ENCODE measurements at regions of chr3 and their contacts with region 1.

Region 1: DNA sequence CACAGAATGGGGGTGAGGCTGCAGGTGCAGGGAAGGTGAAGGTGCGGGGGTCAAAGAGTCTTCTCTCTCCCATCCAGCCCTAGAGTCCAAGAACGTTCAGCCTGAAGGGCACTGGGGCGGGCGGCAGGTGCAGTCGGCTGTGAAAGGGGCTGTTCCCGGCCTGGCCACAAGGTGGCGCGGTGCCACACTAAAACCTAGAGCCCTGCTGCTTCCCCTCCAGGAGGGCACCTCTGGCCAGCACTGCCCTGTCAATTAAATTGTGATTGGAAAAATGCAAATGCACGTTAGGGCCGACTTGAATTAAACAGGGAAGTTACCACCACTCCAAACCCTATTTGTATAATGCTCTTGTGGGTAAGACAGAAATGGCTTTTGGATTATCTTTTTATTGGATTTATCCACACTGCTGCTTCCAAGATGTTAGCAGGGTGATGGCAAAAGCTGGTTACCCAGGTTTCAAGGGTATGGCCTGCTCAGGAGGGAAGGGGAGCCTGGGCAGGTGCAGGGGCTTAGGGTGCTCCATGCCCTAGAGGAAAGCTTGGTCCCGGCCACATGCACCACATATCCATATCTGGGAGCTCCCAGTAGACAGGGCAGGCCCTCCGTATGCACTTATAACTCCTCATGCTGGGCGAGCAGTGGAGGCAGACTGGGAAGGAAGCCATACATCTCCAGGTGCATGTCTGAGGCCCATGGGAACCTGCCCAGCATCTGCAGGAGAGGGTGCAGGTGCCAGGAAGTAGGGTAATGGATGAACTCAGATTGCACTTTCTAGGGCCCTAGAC is 119.8 kb downstream of the ADCY5 start:
- DNase-seq: peak; percentile 34
- ATAC-seq: peak; percentile 98
- H3K4me3 ChIP-seq: no peak overlapping the region
- H3K27ac ChIP-seq: no peak overlapping the region
- H3K4me1 ChIP-seq: no peaks in the 10 kb centered on the region
- H3K27me3 ChIP-seq: peaks cover 46% of the 10 kb centered on the region
- CTCF ChIP-seq: peak; percentile 87
- POLR2A ChIP-seq: no peak
- RAD21 ChIP-seq: peak; percentile 84

Region 2: GRCh38 chr3:122560680-122561079 is 768.4 kb before region 1 on chr3:
- CTCF ChIA-PET with region 1: no interaction called
- POLR2A ChIA-PET with region 1: no interaction called
- dilution Hi-C with region 1: no loop called
- in situ Hi-C with region 1: no loop called
- intact Hi-C with region 1: no loop called
- DNase-seq: peak; percentile 71
- ATAC-seq: peak; percentile 25; the same call in 1 of the 2 replicates
- H3K4me3 ChIP-seq: no peak overlapping the region
- H3K27ac ChIP-seq: no peak overlapping the region
- H3K4me1 ChIP-seq: peaks cover 4% of the 10 kb centered on the region
- H3K27me3 ChIP-seq: no peaks in the 10 kb centered on the region
- CTCF ChIP-seq: peak; percentile 68
- POLR2A ChIP-seq: no peak
- RAD21 ChIP-seq: peak; percentile 66

Region 3: GRCh38 chr3:122679085-122679881 is 649.8 kb before region 1 on chr3:
- CTCF ChIA-PET with region 1: no interaction called
- POLR2A ChIA-PET with region 1: no interaction called
- dilution Hi-C with region 1: no loop called
- in situ Hi-C with region 1: no loop called
- intact Hi-C with region 1: no loop called
- DNase-seq: peak; percentile 79
- ATAC-seq: peak; percentile 74
- H3K4me3 ChIP-seq: peak overlapping the region; percentile 28
- H3K27ac ChIP-seq: peak overlapping the region; percentile 9; the same call in 1 of the 2 replicates
- H3K4me1 ChIP-seq: peaks cover 13% of the 10 kb centered on the region
- H3K27me3 ChIP-seq: no peaks in the 10 kb centered on the region
- CTCF ChIP-seq: peak; percentile 89
- POLR2A ChIP-seq: no peak
- RAD21 ChIP-seq: peak; percentile 87

Region 4: DNA sequence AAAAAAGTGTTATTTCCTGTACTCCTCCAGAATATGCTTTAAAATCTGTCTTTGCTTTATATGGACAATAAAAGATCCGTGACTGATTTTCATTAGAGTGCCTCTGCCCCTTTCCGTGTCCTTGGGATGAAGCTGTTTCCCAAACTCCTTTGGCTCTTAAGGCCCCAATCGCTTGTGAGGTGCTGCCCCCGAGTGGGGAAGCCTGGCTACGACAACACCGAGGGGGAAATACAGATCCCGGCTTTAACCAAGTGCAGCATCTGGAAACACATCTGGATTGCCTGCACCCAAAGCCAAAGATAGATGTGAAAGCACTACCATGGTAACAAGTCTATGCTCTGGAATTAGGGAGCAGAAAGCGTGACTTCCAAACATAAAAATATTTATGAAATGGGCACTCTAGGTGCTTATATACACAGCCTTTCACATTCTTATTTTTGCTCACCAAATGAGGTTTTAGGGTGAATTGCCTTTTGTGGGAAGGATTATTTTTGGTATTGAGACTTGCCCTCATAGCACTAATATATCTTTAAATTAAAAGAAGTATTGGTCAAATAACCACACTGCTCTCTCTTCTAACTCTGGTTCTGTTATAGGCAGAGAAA is 160.5 kb after region 1 on chr3:
- CTCF ChIA-PET with region 1: interaction called, 5 read pairs
- POLR2A ChIA-PET with region 1: no interaction called
- dilution Hi-C with region 1: no loop called
- in situ Hi-C with region 1: loop called (anchors 5 kb)
- intact Hi-C with region 1: loop called (anchors 1 kb)
- DNase-seq: peak; percentile 56
- ATAC-seq: peak; percentile 98
- H3K4me3 ChIP-seq: no peak overlapping the region
- H3K27ac ChIP-seq: no peak overlapping the region
- H3K4me1 ChIP-seq: no peaks in the 10 kb centered on the region
- H3K27me3 ChIP-seq: peaks cover 5% of the 10 kb centered on the region
- CTCF ChIP-seq: peak; percentile 88
- POLR2A ChIP-seq: peak; percentile 56; the same call in 1 of the 2 replicates
- RAD21 ChIP-seq: peak; percentile 94

Measured in IMR-90 (cell line).